ENCODE measurements at regions of chr1 and their contacts with region 1.

Region 1: DNA sequence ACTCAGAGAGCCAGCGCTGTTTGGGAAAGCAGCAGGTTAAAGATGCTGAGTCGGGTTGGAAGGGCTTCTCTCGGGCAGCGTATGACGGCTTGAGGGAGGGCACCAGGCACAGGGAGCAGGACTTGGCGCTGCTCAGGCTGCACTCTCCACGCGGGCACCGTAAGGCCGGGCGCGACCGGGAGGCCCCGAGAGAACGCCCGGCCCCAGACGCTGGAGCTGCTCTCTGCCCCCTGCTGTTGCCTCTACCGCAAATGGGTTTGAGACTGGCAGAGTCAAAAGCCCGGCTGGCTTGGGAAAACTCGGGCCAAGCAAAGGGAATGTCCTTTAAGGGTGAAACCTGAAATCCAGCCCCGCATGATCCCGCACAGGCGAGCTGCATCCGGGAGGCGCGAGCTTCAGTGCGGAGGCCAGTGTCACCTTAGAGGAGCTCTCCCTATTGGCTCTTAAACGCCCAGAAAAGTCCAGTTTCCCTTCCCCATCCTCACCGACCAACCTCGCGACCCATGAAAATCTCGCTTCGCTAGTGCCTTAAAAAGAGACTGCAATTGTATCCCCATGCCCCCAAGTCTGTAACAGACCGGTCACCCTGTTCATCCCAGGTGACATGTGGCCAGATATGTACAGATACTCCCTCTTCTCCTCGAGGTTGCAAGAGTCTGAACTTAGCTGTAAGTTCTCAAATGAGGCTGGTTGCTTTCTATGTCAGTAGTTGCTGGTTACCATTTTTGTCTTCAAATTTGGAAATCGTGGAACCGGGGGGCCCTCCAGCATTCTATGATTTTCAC is 1.1 kb downstream of the PRRX1 start:
- DNase-seq: peak in 1 of 2 donors; percentile 61
- ATAC-seq: peak; percentile 41 to 87 (median 69)
- H3K4me3 ChIP-seq: peak overlapping the region; percentile 54 to 87 (median 70)
- H3K27ac ChIP-seq: peak overlapping the region; percentile 90 to 98 (median 94)
- H3K4me1 ChIP-seq: peaks cover 2 to 53% (median 20%) of the 10 kb centered on the region in 9 donors
- H3K27me3 ChIP-seq: peaks cover 0 to 100% (median 25%) of the 10 kb centered on the region in 7 donors
- CTCF ChIP-seq: peak in 6 of 9 donors; percentile 9 to 44 (median 30)

Region 2: DNA sequence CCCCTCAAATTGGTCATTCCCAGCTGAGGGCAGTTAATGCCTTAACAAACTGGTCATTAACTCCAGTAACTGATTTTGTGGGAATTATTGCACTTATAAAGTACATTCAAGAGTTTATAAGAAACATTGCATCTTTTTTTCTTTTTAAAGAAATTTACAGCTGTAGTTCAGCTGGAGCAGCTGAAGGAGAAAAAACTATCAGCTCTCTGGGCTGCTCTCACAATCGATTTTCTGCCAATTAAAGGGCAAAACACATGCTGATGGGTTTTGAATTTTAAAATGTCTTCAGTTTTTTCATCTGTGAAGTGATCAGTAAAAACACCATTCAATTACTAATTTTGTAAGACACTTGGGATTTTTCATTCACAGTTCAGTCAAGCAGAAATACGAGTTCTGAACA is 665.3 kb before region 1 on chr1:
- intact Hi-C with region 1: loop called in 1 of 10 experiments (anchors 10 kb)
- DNase-seq: no peak
- ATAC-seq: no peak
- H3K4me3 ChIP-seq: no peak overlapping the region
- H3K27ac ChIP-seq: peak overlapping the region in 4 of 10 donors; percentile 18 to 48 (median 29)
- H3K4me1 ChIP-seq: peaks cover 0 to 15% (median 0%) of the 10 kb centered on the region in 9 donors
- H3K27me3 ChIP-seq: no peaks in the 10 kb centered on the region
- CTCF ChIP-seq: no peak

Region 3: GRCh38 chr1:170145770-170146676 is 519.0 kb before region 1 on chr1 and contains the start of gene NTMT2:
- intact Hi-C with region 1: loop called in 1 of 10 experiments (anchors 5 kb)
- DNase-seq: peak; percentile 61 to 63
- ATAC-seq: peak; percentile 88 to 97 (median 96)
- H3K4me3 ChIP-seq: peak within 1 kb of the TSS in 8 of 10 donors; percentile 6 to 42 (median 32)
- H3K27ac ChIP-seq: peak within 1 kb of the TSS; percentile 61 to 95 (median 82)
- H3K4me1 ChIP-seq: peaks cover 0 to 25% (median 12%) of the 10 kb centered on the region in 9 donors
- H3K27me3 ChIP-seq: no peaks in the 10 kb centered on the region
- CTCF ChIP-seq: no peak
- total RNA-seq, gene NTMT2: 0.92 to 3.2 (median 2.7) TPM

Region 4: DNA sequence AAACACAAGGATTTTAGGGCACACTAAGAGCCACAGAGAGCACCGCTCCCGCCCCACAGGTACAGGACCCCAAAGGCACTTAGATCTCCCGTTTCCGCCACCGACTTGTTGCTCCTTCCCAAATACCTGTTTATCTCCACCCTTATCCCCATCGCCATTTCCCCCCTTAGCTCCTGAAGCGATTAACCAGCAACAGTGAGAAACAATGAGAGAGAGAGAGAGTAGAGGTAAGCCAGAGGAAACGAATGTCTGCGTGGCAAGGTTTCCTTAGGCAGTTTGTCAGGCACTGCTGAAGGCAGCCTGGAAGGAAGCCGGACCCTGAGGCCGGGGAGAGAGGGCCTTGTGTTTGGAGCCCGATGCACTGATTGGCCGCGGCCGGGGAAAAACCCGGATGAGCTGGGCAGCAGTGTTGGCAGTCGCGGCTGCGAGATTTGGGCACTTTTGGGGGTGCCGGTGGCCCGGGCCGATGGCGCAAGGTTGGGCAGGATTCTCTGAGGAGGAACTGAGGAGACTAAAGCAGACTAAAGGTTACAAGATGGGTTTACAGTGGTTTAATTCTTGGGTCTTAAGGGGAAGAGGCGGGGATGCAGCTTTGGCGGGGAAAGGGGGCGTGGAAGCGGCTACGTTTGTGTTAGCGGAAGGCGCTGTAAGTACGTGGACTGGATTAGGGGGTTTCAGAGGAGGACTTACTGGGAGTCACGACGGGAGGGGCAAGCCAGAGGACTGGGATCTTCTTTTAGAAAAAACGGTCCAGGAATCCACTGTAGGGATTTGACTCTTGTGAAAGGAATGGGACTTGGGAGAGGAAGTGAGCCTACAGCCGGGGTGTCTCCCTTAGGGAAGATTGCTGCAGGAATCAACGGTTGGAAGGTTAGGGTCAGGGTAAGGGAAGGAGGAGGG is 133.0 kb before region 1 on chr1 and contains the start of gene GORAB:
- intact Hi-C with region 1: loop called in 7 of 10 experiments (anchors 5 to 10 kb)
- DNase-seq: peak; percentile 90 to 93
- ATAC-seq: peak; percentile 97 to 99 (median 99)
- H3K4me3 ChIP-seq: peak within 1 kb of the TSS; percentile 41 to 83 (median 68)
- H3K27ac ChIP-seq: peak within 1 kb of the TSS; percentile 78 to 96 (median 94)
- H3K4me1 ChIP-seq: peaks cover 0 to 38% (median 28%) of the 10 kb centered on the region in 9 donors
- H3K27me3 ChIP-seq: no peaks in the 10 kb centered on the region
- CTCF ChIP-seq: no peak
- total RNA-seq, gene GORAB: 5.6 to 14.4 (median 9.4) TPM

Region 5: GRCh38 chr1:170586321-170587252 is 78.4 kb before region 1 on chr1:
- intact Hi-C with region 1: loop called in 1 of 10 experiments (anchors 5 kb)
- DNase-seq: peak; percentile 7 to 17
- ATAC-seq: peak in 7 of 8 donors; percentile 45 to 76 (median 62)
- H3K4me3 ChIP-seq: peak overlapping the region in 5 of 10 donors; percentile 8 to 28 (median 11)
- H3K27ac ChIP-seq: peak overlapping the region in 7 of 10 donors; percentile 26 to 66 (median 53)
- H3K4me1 ChIP-seq: peaks cover 0 to 14% (median 0%) of the 10 kb centered on the region in 9 donors
- H3K27me3 ChIP-seq: no peaks in the 10 kb centered on the region
- CTCF ChIP-seq: no peak

Region 6: DNA sequence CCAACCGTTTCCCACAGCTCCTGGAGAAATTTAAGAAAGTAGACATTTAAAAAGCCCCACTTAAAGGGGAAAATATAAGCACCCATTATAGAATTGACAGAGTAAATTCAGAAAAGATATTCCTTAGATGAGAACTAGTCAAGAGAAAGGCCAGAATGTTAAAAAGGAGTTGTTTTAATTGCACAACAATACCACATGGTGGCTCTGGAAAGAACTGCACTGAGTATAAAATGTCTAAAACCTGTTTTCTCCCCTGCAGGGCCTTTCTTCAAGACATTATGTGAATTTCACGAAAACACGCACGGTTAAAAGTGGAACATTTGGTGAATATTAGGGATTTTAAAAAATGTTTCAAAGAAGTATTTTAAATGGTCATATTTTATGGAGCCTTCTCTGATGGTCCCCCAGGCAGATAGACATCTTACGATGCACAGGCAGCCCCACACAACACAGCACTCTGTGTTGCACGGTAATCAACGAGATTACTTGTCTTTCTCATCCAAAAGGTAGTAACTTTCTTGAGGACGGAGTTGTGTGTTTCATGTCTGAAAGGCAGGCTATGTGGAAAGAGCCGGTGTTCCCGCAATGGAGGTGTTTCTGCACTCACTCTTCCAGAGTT is 100.8 kb after region 1 on chr1:
- intact Hi-C with region 1: loop called in 4 of 10 experiments (anchors 5 kb)
- DNase-seq: no peak
- ATAC-seq: peak in 6 of 8 donors; percentile 42 to 67 (median 61)
- H3K4me3 ChIP-seq: no peak overlapping the region
- H3K27ac ChIP-seq: no peak overlapping the region
- H3K4me1 ChIP-seq: peaks cover 0 to 4% (median 0%) of the 10 kb centered on the region in 9 donors
- H3K27me3 ChIP-seq: no peaks in the 10 kb centered on the region
- CTCF ChIP-seq: peak; percentile 25 to 72 (median 57)

Measured in heart right ventricle (tissue), 16 donors.